BJ (cell line): ENCODE measurements at regions of chr16 and their contacts with region 1.

Region 1: GRCh38 chr16:21060027-21060510 is 90.6 kb downstream of the DNAH3 start:
- DNase-seq: no peak
- H3K4me3 ChIP-seq: no peak overlapping the region
- H3K27me3 ChIP-seq: peaks cover 4% of the 10 kb centered on the region; the same call in 1 of the 2 replicates
- CTCF ChIP-seq: no peak

Region 2: GRCh38 chr16:20987049-20987448 is 73.0 kb before region 1 on chr16:
- CTCF ChIA-PET with region 1: no interaction called
- POLR2A ChIA-PET with region 1: no interaction called
- DNase-seq: no peak
- H3K4me3 ChIP-seq: no peak overlapping the region
- H3K27me3 ChIP-seq: no peaks in the 10 kb centered on the region
- CTCF ChIP-seq: no peak

Region 3: DNA sequence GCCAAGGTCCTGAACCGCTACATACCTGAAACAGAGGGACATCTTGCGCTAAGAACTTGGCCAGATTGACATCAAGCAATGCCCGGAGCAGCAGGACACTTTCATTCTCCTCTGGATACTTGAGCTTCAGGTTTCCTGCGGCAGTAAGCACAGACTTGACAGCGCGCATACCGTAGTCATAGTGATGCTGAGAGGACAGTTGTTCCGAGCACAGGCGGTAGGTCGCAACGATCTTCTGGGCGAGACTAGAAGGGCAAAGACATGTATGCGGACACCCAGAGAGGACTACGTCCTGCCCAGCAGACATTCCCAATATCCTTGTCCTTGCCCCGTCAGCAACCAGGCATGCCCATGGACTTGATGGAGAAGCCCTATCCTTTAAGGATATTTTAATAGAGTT is 22.3 kb before region 1 on chr16:
- CTCF ChIA-PET with region 1: no interaction called
- POLR2A ChIA-PET with region 1: interaction called, 12 read pairs
- DNase-seq: no peak
- H3K4me3 ChIP-seq: no peak overlapping the region
- H3K27me3 ChIP-seq: no peaks in the 10 kb centered on the region
- CTCF ChIP-seq: no peak